K562 (cell line): ENCODE measurements at regions of chr12 and their contacts with region 1.

Region 1: DNA sequence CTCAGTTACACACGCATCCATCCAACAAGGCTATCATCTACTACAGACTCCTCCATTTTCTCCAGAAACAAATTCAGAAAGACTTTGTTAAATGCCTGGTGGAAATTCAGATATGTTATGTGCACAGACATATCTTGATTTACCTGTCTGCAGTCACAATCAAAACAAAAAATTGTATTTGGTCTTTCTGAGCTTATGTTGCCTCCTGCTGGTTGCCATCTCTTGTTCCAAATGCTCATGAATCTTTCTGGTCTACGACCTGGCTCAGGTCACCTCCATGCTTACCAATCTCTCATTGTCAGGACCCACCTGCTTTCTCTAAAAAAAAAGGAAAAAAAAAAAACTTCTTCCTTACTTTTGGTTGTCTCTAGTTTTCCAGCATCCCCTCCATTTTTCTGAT is 169.2 kb upstream of the PLXNC1 start:
- DNase-seq: peak in 1 of 4 experiments; percentile 50
- ATAC-seq: peak; percentile 56
- H3K4me3 ChIP-seq: no peak overlapping the region
- H3K27ac ChIP-seq: no peak overlapping the region
- H3K4me1 ChIP-seq: peaks cover 0 to 12% of the 10 kb centered on the region in 2 experiments; a peak in 3 of 5 replicates
- H3K27me3 ChIP-seq: no peaks in the 10 kb centered on the region
- CTCF ChIP-seq: peak; percentile 42 to 73 (median 55); a peak in 4 of 6 replicates
- EP300 ChIP-seq: no peak
- POLR2A ChIP-seq: no peak
- RAD21 ChIP-seq: peak; percentile 79 to 94

Region 2: DNA sequence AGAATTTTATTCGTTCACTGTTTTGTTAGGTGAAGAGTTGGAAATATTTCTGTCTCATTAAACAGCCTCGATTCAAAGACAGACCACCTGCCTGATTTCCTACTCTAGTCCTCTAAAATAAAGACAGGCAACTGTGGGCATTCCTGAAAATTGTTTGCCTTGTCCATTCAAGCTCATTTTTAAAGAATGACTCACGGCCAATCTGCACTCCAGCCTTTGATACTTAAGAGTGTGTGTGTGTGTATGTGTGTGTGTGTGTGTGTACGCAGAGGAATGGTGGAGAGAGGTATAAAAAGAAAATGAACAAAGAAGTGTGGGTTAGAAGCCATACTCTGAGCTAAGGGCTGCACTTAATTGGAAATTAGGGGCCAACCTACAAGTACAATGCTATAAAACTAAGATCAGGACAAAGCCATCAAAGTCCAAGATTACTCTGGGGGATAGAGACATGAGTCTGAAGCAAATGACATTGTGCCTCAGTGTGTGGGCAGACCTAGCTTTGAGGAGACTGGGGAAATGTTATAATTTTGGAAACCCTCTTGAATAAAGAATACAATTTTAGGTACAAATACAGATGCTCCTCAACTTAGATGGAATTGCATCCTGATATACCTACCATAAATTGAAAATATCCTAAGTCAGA is 452.3 kb before region 1 on chr12:
- CTCF ChIA-PET with region 1: no interaction called
- POLR2A ChIA-PET with region 1: no interaction called
- in situ Hi-C with region 1: no loop called
- intact Hi-C with region 1: loop called (anchors 10 kb)
- DNase-seq: peak in 1 of 4 experiments; percentile 23
- ATAC-seq: no peak
- H3K4me3 ChIP-seq: no peak overlapping the region
- H3K27ac ChIP-seq: no peak overlapping the region
- H3K4me1 ChIP-seq: peaks cover 0 to 6% of the 10 kb centered on the region in 2 experiments; a peak in 2 of 5 replicates
- H3K27me3 ChIP-seq: no peaks in the 10 kb centered on the region
- CTCF ChIP-seq: no peak
- EP300 ChIP-seq: no peak
- POLR2A ChIP-seq: no peak
- RAD21 ChIP-seq: no peak

Region 3: GRCh38 chr12:93894391-93895088 is 84.6 kb before region 1 on chr12:
- CTCF ChIA-PET with region 1: no interaction called
- POLR2A ChIA-PET with region 1: no interaction called
- in situ Hi-C with region 1: no loop called
- intact Hi-C with region 1: loop called (anchors 5 kb)
- DNase-seq: no peak
- ATAC-seq: no peak
- H3K4me3 ChIP-seq: no peak overlapping the region
- H3K27ac ChIP-seq: no peak overlapping the region
- H3K4me1 ChIP-seq: peaks cover 9 to 12% of the 10 kb centered on the region in 2 experiments; a peak in 4 of 5 replicates
- H3K27me3 ChIP-seq: no peaks in the 10 kb centered on the region
- CTCF ChIP-seq: no peak
- EP300 ChIP-seq: no peak
- POLR2A ChIP-seq: no peak
- RAD21 ChIP-seq: no peak

Region 4: GRCh38 chr12:94001691-94002090 is 22.5 kb after region 1 on chr12:
- CTCF ChIA-PET with region 1: no interaction called
- POLR2A ChIA-PET with region 1: no interaction called
- in situ Hi-C with region 1: no loop called
- intact Hi-C with region 1: no loop called
- DNase-seq: no peak
- ATAC-seq: no peak
- H3K4me3 ChIP-seq: no peak overlapping the region
- H3K27ac ChIP-seq: no peak overlapping the region
- H3K4me1 ChIP-seq: no peaks in the 10 kb centered on the region
- H3K27me3 ChIP-seq: no peaks in the 10 kb centered on the region
- CTCF ChIP-seq: no peak
- EP300 ChIP-seq: no peak
- POLR2A ChIP-seq: no peak
- RAD21 ChIP-seq: no peak